ENCODE measurements at regions of chr6 and their contacts with region 1.

Region 1: DNA sequence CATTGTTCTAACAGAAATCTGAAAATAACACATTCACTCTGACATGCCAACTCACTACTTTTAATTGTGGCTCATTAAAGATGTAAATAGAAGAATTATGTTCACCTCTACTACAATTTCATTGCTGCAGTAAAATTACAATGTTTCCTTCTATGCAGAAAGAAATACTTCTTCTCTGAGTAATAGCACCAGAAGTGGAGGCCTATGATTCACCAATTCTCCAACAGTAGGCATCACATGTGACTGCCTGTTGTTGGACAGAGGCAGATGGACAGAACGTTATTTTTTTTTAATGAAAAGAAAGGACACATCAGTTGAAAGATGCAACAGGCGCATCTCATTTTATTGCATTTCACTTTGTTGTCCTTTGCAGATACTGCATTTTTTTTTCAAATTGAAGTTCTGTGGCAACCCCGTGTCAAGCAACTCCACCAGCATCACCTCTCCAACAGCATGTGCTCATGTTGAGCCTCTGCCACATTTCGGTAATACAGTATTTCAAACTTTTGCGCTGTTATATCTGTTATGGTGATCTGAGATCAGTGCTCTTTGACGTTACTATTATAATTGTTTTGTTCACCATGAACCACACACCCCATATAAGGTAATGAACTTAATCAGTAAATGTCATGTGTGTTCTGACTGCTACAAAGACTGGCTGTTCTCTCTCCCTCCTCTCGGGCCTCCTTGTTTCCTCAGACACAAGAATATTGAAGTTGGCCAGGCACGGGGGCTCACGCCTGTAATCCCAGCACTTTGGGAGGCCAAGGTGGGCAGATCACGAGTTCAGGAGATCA is 121.4 kb downstream of the ATXN1 start:
- DNase-seq: no peak
- H3K4me3 ChIP-seq: no peak overlapping the region
- H3K27ac ChIP-seq: no peak overlapping the region
- H3K4me1 ChIP-seq: no peaks in the 10 kb centered on the region
- H3K27me3 ChIP-seq: no peaks in the 10 kb centered on the region
- CTCF ChIP-seq: no peak
- EP300 ChIP-seq: no peak
- POLR2A ChIP-seq: no peak

Region 2: GRCh38 chr6:15077964-15078363 is 1561.9 kb before region 1 on chr6:
- intact Hi-C with region 1: no loop called
- DNase-seq: no peak
- H3K4me3 ChIP-seq: no peak overlapping the region
- H3K27ac ChIP-seq: no peak overlapping the region
- H3K4me1 ChIP-seq: no peaks in the 10 kb centered on the region
- H3K27me3 ChIP-seq: no peaks in the 10 kb centered on the region
- CTCF ChIP-seq: no peak
- EP300 ChIP-seq: no peak
- POLR2A ChIP-seq: no peak

Region 3: DNA sequence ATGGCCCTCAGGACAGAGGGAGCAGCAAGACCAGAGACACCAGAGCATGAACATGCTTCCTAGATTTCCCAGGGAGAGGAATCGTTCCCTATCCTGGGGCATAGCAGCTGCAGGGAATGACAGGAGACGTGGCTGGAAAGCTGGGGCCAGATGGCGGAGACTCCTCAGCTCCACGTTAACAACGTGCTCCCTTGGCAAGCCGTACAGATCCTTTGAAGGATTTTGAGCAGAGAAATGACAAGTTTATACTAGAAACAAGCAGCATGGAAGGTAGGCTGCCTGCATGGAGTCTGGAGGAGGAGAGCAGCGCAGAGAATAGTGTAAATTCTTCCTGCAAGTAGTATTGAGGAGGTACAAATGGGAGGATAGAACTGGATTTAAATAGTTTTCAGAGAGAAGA is 499.3 kb before region 1 on chr6:
- intact Hi-C with region 1: loop called in 1 of 4 experiments (anchors 5 kb)
- DNase-seq: no peak
- H3K4me3 ChIP-seq: no peak overlapping the region
- H3K27ac ChIP-seq: no peak overlapping the region
- H3K4me1 ChIP-seq: peaks cover 6% of the 10 kb centered on the region
- H3K27me3 ChIP-seq: no peaks in the 10 kb centered on the region
- CTCF ChIP-seq: no peak
- EP300 ChIP-seq: no peak
- POLR2A ChIP-seq: no peak

Region 4: DNA sequence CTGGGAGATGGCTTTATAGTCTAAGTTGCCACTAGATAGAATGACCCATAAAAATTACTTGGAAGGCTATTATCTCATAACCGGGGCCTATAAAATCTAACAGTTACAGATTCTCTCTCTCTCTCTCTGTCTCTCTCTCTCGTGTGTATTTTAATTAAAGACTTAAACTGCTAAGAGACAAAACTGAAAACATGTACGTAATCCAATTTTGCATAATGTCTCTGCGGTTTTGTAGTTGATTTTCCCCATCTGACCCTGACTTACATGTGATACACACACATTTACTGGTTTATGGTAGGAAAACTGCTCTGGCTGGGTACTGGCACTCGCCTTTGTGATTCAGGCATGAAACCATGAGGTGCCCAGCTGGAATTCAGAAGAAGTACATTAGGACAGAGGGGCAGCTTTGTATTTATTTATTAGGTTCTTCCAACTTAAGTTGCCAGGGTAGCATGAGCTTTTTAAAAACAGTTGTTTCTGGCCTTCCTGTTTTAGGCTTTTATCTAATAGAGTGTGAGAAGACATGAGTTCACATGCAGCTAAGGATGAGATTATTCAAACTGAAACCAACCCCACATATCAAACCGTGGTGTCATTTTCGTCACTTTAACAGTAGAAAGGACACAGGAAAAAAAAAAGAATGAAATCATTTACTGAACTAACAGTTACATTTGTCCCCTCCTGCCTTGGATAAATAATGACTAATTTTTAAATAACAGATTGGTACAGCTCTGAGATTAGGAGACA is 219.0 kb before region 1 on chr6:
- intact Hi-C with region 1: no loop called
- DNase-seq: no peak
- H3K4me3 ChIP-seq: no peak overlapping the region
- H3K27ac ChIP-seq: peak overlapping the region in 1 of 2 donors; percentile 5
- H3K4me1 ChIP-seq: peaks cover 5% of the 10 kb centered on the region
- H3K27me3 ChIP-seq: no peaks in the 10 kb centered on the region
- CTCF ChIP-seq: no peak
- EP300 ChIP-seq: no peak
- POLR2A ChIP-seq: no peak

Region 5: GRCh38 chr6:16562498-16562897 is 77.4 kb before region 1 on chr6:
- intact Hi-C with region 1: no loop called
- DNase-seq: no peak
- H3K4me3 ChIP-seq: no peak overlapping the region
- H3K27ac ChIP-seq: no peak overlapping the region
- H3K4me1 ChIP-seq: no peaks in the 10 kb centered on the region
- H3K27me3 ChIP-seq: no peaks in the 10 kb centered on the region
- CTCF ChIP-seq: no peak
- EP300 ChIP-seq: no peak
- POLR2A ChIP-seq: no peak

Measured in ovary (tissue), 10 donors.